Naive thymus-derived CD4-positive, alpha-beta T cell (primary cell): ENCODE measurements at regions of chr2 and their contacts with region 1.

Region 1: DNA sequence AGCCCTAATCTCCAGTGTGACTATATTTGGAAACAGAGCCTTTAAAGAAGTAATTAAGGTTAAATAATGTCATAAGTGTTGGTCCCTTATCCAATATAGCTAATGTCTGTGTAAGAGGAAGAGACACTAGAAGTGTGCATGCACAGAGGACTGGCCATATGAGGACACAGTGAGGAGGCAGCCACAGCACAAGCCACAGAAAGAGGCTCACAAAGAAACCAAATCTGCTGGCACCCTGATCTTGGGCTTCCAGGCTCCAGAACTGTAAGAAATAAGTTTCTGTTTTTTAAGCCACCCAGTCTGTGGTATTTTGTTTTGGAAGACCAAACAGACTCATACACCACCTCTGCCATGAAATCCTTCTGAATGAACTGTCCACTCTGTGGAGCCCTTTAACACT is 186.4 kb upstream of the SLC39A10 start:
- DNase-seq: no peak
- ATAC-seq: no peak
- H3K4me3 ChIP-seq: no peak overlapping the region
- H3K4me3 Mint-ChIP-seq: no peak overlapping the region
- H3K27ac ChIP-seq: no peak overlapping the region
- H3K27ac Mint-ChIP-seq: no peak overlapping the region
- H3K4me1 ChIP-seq: peaks cover 0 to 8% of the 10 kb centered on the region in 2 donors
- H3K4me1 Mint-ChIP-seq: peaks cover 11 to 26% (median 24%) of the 10 kb centered on the region in 7 donors
- H3K27me3 ChIP-seq: no peaks in the 10 kb centered on the region
- H3K27me3 Mint-ChIP-seq: no peaks in the 10 kb centered on the region

Region 2: GRCh38 chr2:195388028-195388427 is 82.6 kb before region 1 on chr2:
- CTCF ChIA-PET with region 1: no interaction called
- POLR2A ChIA-PET with region 1: no interaction called
- intact Hi-C with region 1: loop called in 1 of 2 experiments (anchors 5 kb)
- DNase-seq: no peak
- ATAC-seq: no peak
- H3K4me3 ChIP-seq: no peak overlapping the region
- H3K4me3 Mint-ChIP-seq: no peak overlapping the region
- H3K27ac ChIP-seq: no peak overlapping the region
- H3K27ac Mint-ChIP-seq: no peak overlapping the region
- H3K4me1 ChIP-seq: no peaks in the 10 kb centered on the region
- H3K4me1 Mint-ChIP-seq: peaks cover 0 to 20% (median 12%) of the 10 kb centered on the region in 7 donors
- H3K27me3 ChIP-seq: no peaks in the 10 kb centered on the region
- H3K27me3 Mint-ChIP-seq: no peaks in the 10 kb centered on the region

Region 3: GRCh38 chr2:195543902-195544894 is 73.6 kb after region 1 on chr2:
- CTCF ChIA-PET with region 1: no interaction called
- POLR2A ChIA-PET with region 1: no interaction called
- intact Hi-C with region 1: no loop called
- DNase-seq: no peak
- ATAC-seq: peak; percentile 41
- H3K4me3 ChIP-seq: no peak overlapping the region
- H3K4me3 Mint-ChIP-seq: peak overlapping the region in 9 of 10 donors; percentile 0 to 70 (median 54)
- H3K27ac ChIP-seq: peak overlapping the region; percentile 52
- H3K27ac Mint-ChIP-seq: peak overlapping the region; percentile 24 to 100 (median 85)
- H3K4me1 ChIP-seq: peaks cover 20 to 27% of the 10 kb centered on the region in 2 donors
- H3K4me1 Mint-ChIP-seq: peaks cover 29 to 80% (median 61%) of the 10 kb centered on the region in 7 donors
- H3K27me3 ChIP-seq: no peaks in the 10 kb centered on the region
- H3K27me3 Mint-ChIP-seq: no peaks in the 10 kb centered on the region